Heart right ventricle (tissue), 16 donors: ENCODE measurements at regions of chr20 and their contacts with region 1.

Region 1: DNA sequence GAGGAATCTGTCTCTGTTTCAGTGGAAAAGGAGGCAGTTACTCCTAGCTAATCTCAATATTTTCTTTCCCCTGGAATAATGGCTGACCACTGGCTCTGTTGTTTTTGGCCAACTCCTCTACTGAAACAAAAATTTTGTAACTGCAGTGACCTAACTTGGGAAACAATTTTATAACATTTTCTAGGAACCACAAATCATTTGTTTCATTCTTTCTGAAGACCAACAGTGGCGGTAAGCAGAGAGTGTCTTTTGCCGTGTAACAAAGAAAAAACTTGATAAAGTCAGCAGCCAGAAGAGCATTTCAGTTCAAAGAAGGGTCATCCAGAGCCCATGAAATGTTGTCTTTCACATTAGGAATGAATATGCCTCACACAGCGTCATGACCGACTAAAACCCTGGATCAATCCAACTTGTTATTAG is 11.8 kb upstream of the BFSP1 start:
- DNase-seq: no peak
- ATAC-seq: peak; percentile 55 to 89 (median 78)
- H3K4me3 ChIP-seq: no peak overlapping the region
- H3K27ac ChIP-seq: peak overlapping the region in 9 of 10 donors; percentile 8 to 72 (median 63)
- H3K4me1 ChIP-seq: peaks cover 0 to 21% (median 7%) of the 10 kb centered on the region in 9 donors
- H3K27me3 ChIP-seq: no peaks in the 10 kb centered on the region
- CTCF ChIP-seq: no peak

Region 2: GRCh38 chr20:17460119-17460518 is 82.9 kb before region 1 on chr20:
- intact Hi-C with region 1: no loop called
- DNase-seq: no peak
- ATAC-seq: no peak
- H3K4me3 ChIP-seq: no peak overlapping the region
- H3K27ac ChIP-seq: no peak overlapping the region
- H3K4me1 ChIP-seq: no peaks in the 10 kb centered on the region
- H3K27me3 ChIP-seq: peaks cover 0 to 20% (median 14%) of the 10 kb centered on the region in 7 donors
- CTCF ChIP-seq: no peak

Region 3: DNA sequence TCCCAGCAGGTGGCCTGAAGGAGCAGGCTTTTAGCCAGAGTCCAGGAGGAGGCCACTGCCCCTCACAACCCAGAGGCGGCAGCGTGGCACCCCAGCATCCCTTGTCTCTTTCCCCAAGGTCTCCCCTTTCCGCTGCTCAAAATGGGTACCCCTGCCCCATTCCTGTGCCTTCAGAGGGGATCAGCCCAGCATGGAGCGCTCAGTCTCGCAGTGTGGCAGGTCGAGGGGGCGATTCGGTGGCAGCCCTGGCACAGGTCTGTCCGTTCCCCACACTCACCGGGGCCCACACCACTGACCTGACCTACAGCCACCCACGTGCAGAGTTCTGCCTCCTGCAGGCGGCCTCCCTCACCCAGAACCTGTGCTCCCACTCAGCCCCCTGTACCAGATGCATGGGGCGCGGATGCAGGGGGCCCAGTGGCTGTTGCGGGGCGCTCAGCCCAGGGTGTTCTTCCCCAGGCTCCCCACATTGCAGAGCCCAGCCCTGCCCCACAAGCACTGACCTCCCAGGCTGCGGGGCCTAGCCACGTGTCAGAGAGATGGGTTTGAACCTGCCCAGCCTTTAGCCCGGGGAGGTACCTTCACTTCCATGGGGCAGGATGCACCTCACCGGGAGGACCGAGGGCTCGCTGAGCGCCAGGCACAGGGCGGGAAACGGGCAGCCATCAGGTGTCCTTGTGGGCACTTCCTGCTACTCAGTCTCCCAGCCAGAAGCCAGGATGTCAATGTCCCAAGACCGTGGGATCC is 68.7 kb after region 1 on chr20:
- intact Hi-C with region 1: loop called in 3 of 10 experiments (anchors 2 to 5 kb)
- DNase-seq: no peak
- ATAC-seq: peak in 5 of 8 donors; percentile 2 to 18 (median 5)
- H3K4me3 ChIP-seq: no peak overlapping the region
- H3K27ac ChIP-seq: peak overlapping the region in 9 of 10 donors; percentile 42 to 66 (median 56)
- H3K4me1 ChIP-seq: peaks cover 32 to 69% (median 53%) of the 10 kb centered on the region in 9 donors
- H3K27me3 ChIP-seq: no peaks in the 10 kb centered on the region
- CTCF ChIP-seq: peak in 3 of 9 donors; percentile 3 to 38 (median 30)